ENCODE measurements at regions of chr16 and their contacts with region 1.

Region 1: GRCh38 chr16:47732523-47733111 is 271.5 kb downstream of the PHKB start:
- DNase-seq: peak; percentile 80
- H3K4me3 ChIP-seq: no peak overlapping the region; the same call in 1 of the 2 replicates
- CTCF ChIP-seq: no peak

Region 2: GRCh38 chr16:47460711-47461597 is 271.7 kb before region 1 on chr16 and contains the starts of genes ITFG1 and PHKB:
- CTCF ChIA-PET with region 1: no interaction called
- POLR2A ChIA-PET with region 1: interaction called, 10 read pairs
- DNase-seq: peak; percentile 41
- H3K4me3 ChIP-seq: peak within 1 kb of the TSS; percentile 91
- CTCF ChIP-seq: no peak

Measured in AG04449 (cell line).